ENCODE measurements at regions of chr1 and their contacts with region 1.

Region 1: GRCh38 chr1:111639602-111640198 is 20.1 kb downstream of the RAP1A start:
- DNase-seq: no peak
- ATAC-seq: no peak
- H3K4me3 ChIP-seq: no peak overlapping the region
- H3K4me3 Mint-ChIP-seq: no peak overlapping the region
- H3K27ac ChIP-seq: no peak overlapping the region
- H3K27ac Mint-ChIP-seq: peak overlapping the region; percentile 32
- H3K4me1 ChIP-seq: peaks cover 62% of the 10 kb centered on the region
- H3K4me1 Mint-ChIP-seq: peaks cover 78% of the 10 kb centered on the region
- H3K27me3 ChIP-seq: no peaks in the 10 kb centered on the region
- H3K27me3 Mint-ChIP-seq: no peaks in the 10 kb centered on the region
- CTCF ChIP-seq: no peak

Region 2: DNA sequence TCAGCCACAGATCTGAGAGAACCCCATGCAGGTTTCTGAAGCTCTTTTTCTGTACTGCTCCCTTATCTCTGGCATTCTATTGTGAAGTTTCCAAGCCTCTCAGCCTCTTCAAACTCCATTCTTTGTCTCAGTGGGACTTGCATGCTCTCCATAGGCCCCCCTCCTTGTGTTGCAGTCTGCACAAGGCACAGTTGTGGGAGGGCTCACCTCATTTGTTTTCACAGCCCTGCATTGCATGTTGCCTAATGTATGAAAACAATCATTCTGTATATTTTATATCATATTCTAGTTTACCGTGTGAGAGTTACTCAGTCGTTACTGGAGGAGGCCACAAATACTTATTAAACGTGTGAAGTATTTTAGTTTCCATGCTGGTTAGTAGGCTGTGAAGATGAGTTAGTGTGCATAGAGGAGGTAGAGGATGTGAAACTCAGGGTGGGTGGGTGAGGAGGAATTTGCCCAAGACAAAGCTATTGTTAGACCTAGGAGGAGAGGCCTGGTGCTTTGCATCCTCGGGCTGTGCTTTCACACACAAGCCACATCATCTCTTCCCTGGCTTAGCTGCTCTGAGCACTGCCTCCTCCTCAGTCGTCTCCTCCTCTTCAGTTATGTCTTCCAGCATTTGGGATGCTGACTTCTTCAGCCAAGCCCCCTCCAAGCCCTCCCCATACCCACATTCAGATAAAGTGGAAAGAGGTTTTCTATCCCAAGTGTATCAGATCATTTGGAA is 420.0 kb before region 1 on chr1:
- CTCF ChIA-PET with region 1: no interaction called
- POLR2A ChIA-PET with region 1: no interaction called
- intact Hi-C with region 1: no loop called
- DNase-seq: peak in 2 of 9 experiments; percentile 32 to 55
- ATAC-seq: no peak
- H3K4me3 ChIP-seq: peak overlapping the region in 1 of 2 experiments; percentile 14
- H3K4me3 Mint-ChIP-seq: peak overlapping the region; percentile 43
- H3K27ac ChIP-seq: peak overlapping the region; percentile 30 to 84
- H3K27ac Mint-ChIP-seq: peak overlapping the region; percentile 94
- H3K4me1 ChIP-seq: peaks cover 95% of the 10 kb centered on the region
- H3K4me1 Mint-ChIP-seq: peaks cover 92% of the 10 kb centered on the region
- H3K27me3 ChIP-seq: no peaks in the 10 kb centered on the region
- H3K27me3 Mint-ChIP-seq: no peaks in the 10 kb centered on the region
- CTCF ChIP-seq: no peak

Region 3: GRCh38 chr1:111603979-111604378 is 35.7 kb before region 1 on chr1:
- CTCF ChIA-PET with region 1: no interaction called
- POLR2A ChIA-PET with region 1: no interaction called
- intact Hi-C with region 1: loop called in 1 of 2 experiments (anchors 1 kb)
- DNase-seq: peak; percentile 57 to 91 (median 81)
- ATAC-seq: peak; percentile 96
- H3K4me3 ChIP-seq: no peak overlapping the region
- H3K4me3 Mint-ChIP-seq: peak overlapping the region; percentile 52
- H3K27ac ChIP-seq: peak overlapping the region; percentile 13 to 67
- H3K27ac Mint-ChIP-seq: peak overlapping the region; percentile 89
- H3K4me1 ChIP-seq: peaks cover 51% of the 10 kb centered on the region
- H3K4me1 Mint-ChIP-seq: peaks cover 72% of the 10 kb centered on the region
- H3K27me3 ChIP-seq: no peaks in the 10 kb centered on the region
- H3K27me3 Mint-ChIP-seq: no peaks in the 10 kb centered on the region
- CTCF ChIP-seq: no peak

Region 4: GRCh38 chr1:111628153-111628552 is 11.5 kb before region 1 on chr1:
- CTCF ChIA-PET with region 1: interaction called, 5 read pairs
- POLR2A ChIA-PET with region 1: no interaction called
- intact Hi-C with region 1: loop called in 1 of 2 experiments (anchors 1 kb)
- DNase-seq: no peak
- ATAC-seq: no peak
- H3K4me3 ChIP-seq: no peak overlapping the region
- H3K4me3 Mint-ChIP-seq: peak overlapping the region; percentile 49
- H3K27ac ChIP-seq: peak overlapping the region in 1 of 2 experiments; percentile 51
- H3K27ac Mint-ChIP-seq: peak overlapping the region; percentile 78
- H3K4me1 ChIP-seq: peaks cover 88% of the 10 kb centered on the region
- H3K4me1 Mint-ChIP-seq: peaks cover 88% of the 10 kb centered on the region
- H3K27me3 ChIP-seq: no peaks in the 10 kb centered on the region
- H3K27me3 Mint-ChIP-seq: no peaks in the 10 kb centered on the region
- CTCF ChIP-seq: no peak

Region 5: GRCh38 chr1:111656086-111657017 is 16.7 kb after region 1 on chr1:
- CTCF ChIA-PET with region 1: no interaction called
- POLR2A ChIA-PET with region 1: no interaction called
- intact Hi-C with region 1: loop called in 1 of 2 experiments (anchors 2 kb)
- DNase-seq: peak in 2 of 9 experiments; percentile 57 to 68
- ATAC-seq: no peak
- H3K4me3 ChIP-seq: no peak overlapping the region
- H3K4me3 Mint-ChIP-seq: no peak overlapping the region
- H3K27ac ChIP-seq: no peak overlapping the region
- H3K27ac Mint-ChIP-seq: peak overlapping the region; percentile 33
- H3K4me1 ChIP-seq: peaks cover 63% of the 10 kb centered on the region
- H3K4me1 Mint-ChIP-seq: peaks cover 53% of the 10 kb centered on the region
- H3K27me3 ChIP-seq: no peaks in the 10 kb centered on the region
- H3K27me3 Mint-ChIP-seq: no peaks in the 10 kb centered on the region
- CTCF ChIP-seq: peak; percentile 62

Measured in CD8-positive, alpha-beta T cell (primary cell).